ENCODE measurements at regions of chr4 and their contacts with region 1.

Region 1: GRCh38 chr4:88514557-88515511 is 8.7 kb downstream of the PYURF start:
- DNase-seq: no peak
- CTCF ChIP-seq: no peak

Region 2: GRCh38 chr4:88378691-88379559 is 135.9 kb before region 1 on chr4 and contains the start of gene HERC6:
- in situ Hi-C with region 1: loop called (anchors 10 kb)
- DNase-seq: peak; percentile 82
- CTCF ChIP-seq: peak; percentile 89

Region 3: DNA sequence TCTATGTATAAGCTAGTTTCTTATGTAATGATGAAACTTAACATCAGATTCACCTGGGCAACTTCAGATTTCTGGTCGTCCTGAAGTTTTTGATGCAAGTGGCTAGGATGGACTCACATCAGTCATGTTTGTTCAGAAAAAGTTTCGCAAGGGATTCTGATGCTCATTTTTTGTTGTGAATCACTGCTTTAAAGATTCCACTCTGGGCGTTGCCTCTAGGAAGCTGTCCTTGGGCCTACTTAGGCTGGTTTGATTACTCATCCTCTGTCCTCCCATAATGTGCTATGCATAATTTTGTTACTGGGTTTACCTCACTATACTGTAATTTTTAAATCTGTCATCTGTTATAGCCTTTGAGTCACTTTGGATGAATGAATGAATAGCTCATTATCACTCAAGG is 108.3 kb after region 1 on chr4:
- in situ Hi-C with region 1: no loop called
- DNase-seq: no peak
- CTCF ChIP-seq: no peak

Region 4: GRCh38 chr4:88889451-88889850 is 374.6 kb after region 1 on chr4:
- in situ Hi-C with region 1: no loop called
- DNase-seq: no peak
- CTCF ChIP-seq: no peak

Region 5: GRCh38 chr4:88964450-88964849 is 449.6 kb after region 1 on chr4:
- in situ Hi-C with region 1: no loop called
- DNase-seq: no peak
- CTCF ChIP-seq: no peak

Region 6: GRCh38 chr4:89496851-89497250 is 982.0 kb after region 1 on chr4:
- in situ Hi-C with region 1: no loop called
- DNase-seq: no peak
- CTCF ChIP-seq: no peak

Measured in GM13977 (cell line).